ENCODE measurements at regions of chr11 and their contacts with region 1.

Region 1: GRCh38 chr11:62591448-62592145 is at the start of gene TUT1:
- DNase-seq: peak; percentile 92 to 100 (median 96)
- ATAC-seq: peak; percentile 87
- H3K4me3 ChIP-seq: peak within 1 kb of the TSS; percentile 72 to 79
- H3K4me3 Mint-ChIP-seq: peak within 1 kb of the TSS; percentile 95
- H3K27ac ChIP-seq: peak within 1 kb of the TSS; percentile 87 to 93
- H3K27ac Mint-ChIP-seq: peak within 1 kb of the TSS; percentile 98
- H3K4me1 ChIP-seq: peaks cover 32% of the 10 kb centered on the region
- H3K4me1 Mint-ChIP-seq: peaks cover 48% of the 10 kb centered on the region
- H3K27me3 ChIP-seq: no peaks in the 10 kb centered on the region
- H3K27me3 Mint-ChIP-seq: no peaks in the 10 kb centered on the region
- CTCF ChIP-seq: no peak
- total RNA-seq, gene TUT1: 15.3 to 17.7 TPM

Region 2: DNA sequence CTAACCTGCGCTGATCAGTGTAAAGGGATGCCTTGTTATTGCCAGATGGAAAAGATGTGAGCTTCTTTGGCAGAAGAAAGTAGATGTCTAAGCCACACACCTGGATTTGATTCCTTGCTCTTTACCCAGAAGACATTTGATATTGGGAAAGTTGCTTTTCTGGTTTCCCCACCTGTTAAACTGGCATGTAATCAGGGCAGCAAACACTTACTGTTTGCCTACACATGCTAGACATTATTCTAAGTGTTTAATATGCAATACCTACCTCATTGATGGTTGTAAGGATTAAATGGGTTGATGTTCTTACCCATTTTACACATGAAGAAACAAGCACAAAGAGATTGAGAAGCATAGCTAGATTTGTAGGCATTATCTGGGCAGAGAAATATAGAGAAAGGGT is 237.8 kb before region 1 on chr11:
- CTCF ChIA-PET with region 1: no interaction called
- POLR2A ChIA-PET with region 1: no interaction called
- intact Hi-C with region 1: no loop called
- DNase-seq: no peak
- ATAC-seq: no peak
- H3K4me3 ChIP-seq: no peak overlapping the region
- H3K4me3 Mint-ChIP-seq: no peak overlapping the region
- H3K27ac ChIP-seq: no peak overlapping the region
- H3K27ac Mint-ChIP-seq: no peak overlapping the region
- H3K4me1 ChIP-seq: no peaks in the 10 kb centered on the region
- H3K4me1 Mint-ChIP-seq: peaks cover 5% of the 10 kb centered on the region
- H3K27me3 ChIP-seq: no peaks in the 10 kb centered on the region
- H3K27me3 Mint-ChIP-seq: no peaks in the 10 kb centered on the region
- CTCF ChIP-seq: no peak

Region 3: GRCh38 chr11:62573592-62574362 is 17.8 kb before region 1 on chr11 and contains the start of gene EEF1G:
- CTCF ChIA-PET with region 1: interaction called, 7 read pairs
- POLR2A ChIA-PET with region 1: interaction called, 58 read pairs
- intact Hi-C with region 1: loop called (anchors 1 kb)
- DNase-seq: peak; percentile 95 to 100 (median 97)
- ATAC-seq: peak; percentile 94
- H3K4me3 ChIP-seq: peak within 1 kb of the TSS; percentile 97 to 99
- H3K4me3 Mint-ChIP-seq: peak within 1 kb of the TSS; percentile 97
- H3K27ac ChIP-seq: peak within 1 kb of the TSS; percentile 85
- H3K27ac Mint-ChIP-seq: peak within 1 kb of the TSS; percentile 90
- H3K4me1 ChIP-seq: peaks cover 28% of the 10 kb centered on the region
- H3K4me1 Mint-ChIP-seq: peaks cover 55% of the 10 kb centered on the region
- H3K27me3 ChIP-seq: no peaks in the 10 kb centered on the region
- H3K27me3 Mint-ChIP-seq: no peaks in the 10 kb centered on the region
- CTCF ChIP-seq: no peak
- total RNA-seq, gene EEF1G: 2,174 to 2,204 TPM

Region 4: DNA sequence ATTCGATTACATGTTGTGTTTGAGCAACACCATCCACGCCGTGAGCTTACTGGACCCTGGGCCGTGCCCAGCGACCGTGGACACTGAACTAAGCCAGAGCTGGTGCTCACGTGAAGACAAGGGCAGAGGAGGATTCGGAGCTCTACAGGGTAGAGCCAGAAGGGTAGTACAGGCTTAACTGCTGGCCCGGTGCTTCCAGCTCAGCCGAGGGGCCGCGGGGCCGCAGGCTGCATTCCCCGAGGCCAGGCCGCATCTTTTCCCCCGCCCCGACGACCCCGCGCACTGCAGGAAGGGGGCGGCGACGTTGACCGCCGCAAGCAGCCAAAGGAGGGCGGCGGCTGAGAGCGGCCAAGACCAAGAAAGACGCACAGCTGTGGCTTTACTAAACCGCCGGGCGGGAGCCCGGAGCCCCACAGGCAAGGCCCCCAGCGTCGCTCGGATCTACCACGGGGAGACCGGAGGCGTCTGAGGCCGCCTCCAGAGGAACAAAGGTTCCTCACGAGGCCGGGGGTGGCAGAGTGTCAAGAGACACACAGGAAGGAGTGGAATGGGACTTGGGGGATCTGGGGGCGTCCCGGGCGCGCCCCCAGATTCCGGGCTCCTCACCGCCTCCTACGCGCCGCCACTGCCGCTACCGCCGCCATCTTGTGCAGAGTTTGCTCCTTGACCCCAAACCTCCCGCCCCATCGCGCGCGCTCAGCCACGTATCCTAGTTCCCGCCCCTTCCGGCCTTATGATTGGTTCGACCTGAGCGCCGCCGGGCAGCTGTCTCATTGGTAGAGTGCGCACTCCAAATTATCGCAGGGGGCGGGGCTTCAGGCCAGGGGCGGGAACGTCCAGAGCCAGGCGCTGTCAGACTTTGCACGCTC is 54.6 kb after region 1 on chr11 and contains the start of gene GANAB:
- CTCF ChIA-PET with region 1: interaction called, 7 read pairs
- POLR2A ChIA-PET with region 1: interaction called, 23 read pairs
- intact Hi-C with region 1: loop called (anchors 1 kb)
- DNase-seq: peak; percentile 96 to 99 (median 99)
- ATAC-seq: peak; percentile 98
- H3K4me3 ChIP-seq: peak within 1 kb of the TSS; percentile 81 to 98
- H3K4me3 Mint-ChIP-seq: peak within 1 kb of the TSS; percentile 98
- H3K27ac ChIP-seq: peak within 1 kb of the TSS; percentile 90 to 98
- H3K27ac Mint-ChIP-seq: peak within 1 kb of the TSS; percentile 98
- H3K4me1 ChIP-seq: peaks cover 27% of the 10 kb centered on the region
- H3K4me1 Mint-ChIP-seq: peaks cover 37% of the 10 kb centered on the region
- H3K27me3 ChIP-seq: no peaks in the 10 kb centered on the region
- H3K27me3 Mint-ChIP-seq: no peaks in the 10 kb centered on the region
- CTCF ChIP-seq: no peak
- total RNA-seq, gene GANAB: 177 to 184 TPM

Region 5: GRCh38 chr11:62678770-62679696 is 87.4 kb after region 1 on chr11 and contains the start of gene UBXN1:
- CTCF ChIA-PET with region 1: interaction called, 5 read pairs
- POLR2A ChIA-PET with region 1: interaction called, 21 read pairs
- intact Hi-C with region 1: loop called in 1 of 2 experiments (anchors 1 kb)
- DNase-seq: peak; percentile 59 to 92 (median 85)
- ATAC-seq: peak; percentile 74
- H3K4me3 ChIP-seq: peak within 1 kb of the TSS; percentile 91 to 100
- H3K4me3 Mint-ChIP-seq: peak within 1 kb of the TSS; percentile 90
- H3K27ac ChIP-seq: peak within 1 kb of the TSS; percentile 87 to 94
- H3K27ac Mint-ChIP-seq: peak within 1 kb of the TSS; percentile 93
- H3K4me1 ChIP-seq: peaks cover 26% of the 10 kb centered on the region
- H3K4me1 Mint-ChIP-seq: peaks cover 39% of the 10 kb centered on the region
- H3K27me3 ChIP-seq: no peaks in the 10 kb centered on the region
- H3K27me3 Mint-ChIP-seq: no peaks in the 10 kb centered on the region
- CTCF ChIP-seq: no peak
- total RNA-seq, gene UBXN1: 232 to 242 TPM

Region 6: GRCh38 chr11:62753736-62754603 is 162.4 kb after region 1 on chr11 and contains the start of gene ZBTB3:
- CTCF ChIA-PET with region 1: interaction called, 5 read pairs
- POLR2A ChIA-PET with region 1: interaction called, 15 read pairs
- intact Hi-C with region 1: no loop called
- DNase-seq: peak; percentile 93 to 100 (median 96)
- ATAC-seq: peak; percentile 93
- H3K4me3 ChIP-seq: peak within 1 kb of the TSS; percentile 72 to 88
- H3K4me3 Mint-ChIP-seq: peak within 1 kb of the TSS; percentile 99
- H3K27ac ChIP-seq: peak within 1 kb of the TSS; percentile 64 to 91
- H3K27ac Mint-ChIP-seq: peak within 1 kb of the TSS; percentile 98
- H3K4me1 ChIP-seq: peaks cover 28% of the 10 kb centered on the region
- H3K4me1 Mint-ChIP-seq: peaks cover 32% of the 10 kb centered on the region
- H3K27me3 ChIP-seq: no peaks in the 10 kb centered on the region
- H3K27me3 Mint-ChIP-seq: no peaks in the 10 kb centered on the region
- CTCF ChIP-seq: no peak
- total RNA-seq, gene ZBTB3: 3.7 to 4.8 TPM

Region 7: GRCh38 chr11:62880803-62881578 is 289.4 kb after region 1 on chr11 and contains the start of gene SLC3A2:
- CTCF ChIA-PET with region 1: interaction called, 5 read pairs
- POLR2A ChIA-PET with region 1: interaction called, 16 read pairs
- intact Hi-C with region 1: loop called (anchors 1 to 2 kb)
- DNase-seq: peak; percentile 76 to 94 (median 85)
- ATAC-seq: peak; percentile 74
- H3K4me3 ChIP-seq: peak within 1 kb of the TSS; percentile 66 to 97
- H3K4me3 Mint-ChIP-seq: peak within 1 kb of the TSS; percentile 100
- H3K27ac ChIP-seq: peak within 1 kb of the TSS; percentile 94 to 99
- H3K27ac Mint-ChIP-seq: peak within 1 kb of the TSS; percentile 100
- H3K4me1 ChIP-seq: peaks cover 36% of the 10 kb centered on the region
- H3K4me1 Mint-ChIP-seq: peaks cover 50% of the 10 kb centered on the region
- H3K27me3 ChIP-seq: no peaks in the 10 kb centered on the region
- H3K27me3 Mint-ChIP-seq: no peaks in the 10 kb centered on the region
- CTCF ChIP-seq: peak; percentile 84
- total RNA-seq, gene SLC3A2: 212 to 245 TPM

Measured in CD8-positive, alpha-beta T cell (primary cell).